Lower lobe of right lung (tissue), 2 donors: ENCODE measurements at regions of chr6 and their contacts with region 1.

Region 1: GRCh38 chr6:168439794-168440450 is 1.1 kb upstream of the SMOC2 start:
- DNase-seq: no peak
- ATAC-seq: no peak
- H3K4me3 ChIP-seq: no peak overlapping the region
- H3K27ac ChIP-seq: no peak overlapping the region
- H3K4me1 ChIP-seq: no peaks in the 10 kb centered on the region
- H3K27me3 ChIP-seq: peaks cover 39% of the 10 kb centered on the region
- CTCF ChIP-seq: no peak

Region 2: DNA sequence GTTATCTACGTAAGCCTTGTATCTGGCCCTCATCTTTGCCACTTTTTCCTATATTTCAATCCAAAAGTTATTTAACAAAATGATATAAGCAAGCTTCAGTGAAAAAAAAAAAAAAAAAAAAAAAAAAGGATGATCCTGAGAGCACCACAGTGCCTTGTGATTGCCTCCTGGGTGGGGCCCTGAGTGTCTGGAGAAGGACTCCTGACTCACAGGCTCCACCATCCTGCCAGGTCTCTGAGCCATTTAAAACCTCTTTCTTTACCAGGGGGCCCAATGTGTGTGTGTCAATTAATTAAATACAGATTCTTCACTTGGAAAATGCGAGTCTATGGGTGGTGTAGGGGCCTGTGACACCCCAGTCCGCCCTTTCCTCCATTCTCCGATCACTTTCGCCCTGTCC is 106.2 kb after region 1 on chr6:
- intact Hi-C with region 1: loop called (anchors 5 kb)
- DNase-seq: no peak
- ATAC-seq: no peak
- H3K4me3 ChIP-seq: no peak overlapping the region
- H3K27ac ChIP-seq: no peak overlapping the region
- H3K4me1 ChIP-seq: no peaks in the 10 kb centered on the region
- H3K27me3 ChIP-seq: no peaks in the 10 kb centered on the region
- CTCF ChIP-seq: no peak

Region 3: DNA sequence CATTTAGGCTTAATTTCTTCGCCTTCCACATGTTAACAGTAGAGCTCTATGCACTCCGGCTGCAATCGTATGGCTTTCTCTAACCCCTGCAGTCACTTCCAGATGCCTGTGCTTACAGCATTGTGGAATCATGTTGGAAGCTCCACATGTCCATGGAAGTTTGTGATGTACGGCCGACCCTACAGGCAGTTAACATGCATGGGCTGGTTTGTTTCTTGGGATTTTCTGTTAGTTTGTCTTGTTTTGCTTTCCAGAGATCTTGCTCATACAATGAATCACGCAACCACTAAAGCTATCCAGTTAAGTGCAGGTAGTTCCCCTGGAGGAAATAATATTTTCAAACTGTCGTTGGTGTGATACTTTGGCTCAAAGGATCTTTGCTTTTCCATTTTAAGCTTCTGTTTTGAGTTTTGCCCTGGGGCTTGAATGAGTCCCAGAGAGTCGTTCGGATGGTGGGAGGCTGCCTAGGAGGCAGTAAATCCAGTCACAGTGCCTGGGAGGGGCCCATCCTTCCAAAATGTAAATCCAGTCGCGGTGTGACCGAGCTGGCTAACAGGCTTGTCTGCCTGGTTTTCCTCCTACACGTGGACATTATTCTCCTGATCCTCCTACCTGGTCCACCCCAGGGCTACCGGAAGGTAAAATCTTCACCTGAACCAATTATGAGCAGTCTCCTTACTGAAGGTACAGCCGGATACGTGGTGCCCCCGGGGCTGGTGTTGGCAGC is 226.9 kb after region 1 on chr6:
- intact Hi-C with region 1: no loop called
- DNase-seq: no peak
- ATAC-seq: no peak
- H3K4me3 ChIP-seq: no peak overlapping the region
- H3K27ac ChIP-seq: no peak overlapping the region
- H3K4me1 ChIP-seq: no peaks in the 10 kb centered on the region
- H3K27me3 ChIP-seq: no peaks in the 10 kb centered on the region
- CTCF ChIP-seq: no peak